IMR-90 (cell line): ENCODE measurements at regions of chr17 and their contacts with region 1.

Region 1: DNA sequence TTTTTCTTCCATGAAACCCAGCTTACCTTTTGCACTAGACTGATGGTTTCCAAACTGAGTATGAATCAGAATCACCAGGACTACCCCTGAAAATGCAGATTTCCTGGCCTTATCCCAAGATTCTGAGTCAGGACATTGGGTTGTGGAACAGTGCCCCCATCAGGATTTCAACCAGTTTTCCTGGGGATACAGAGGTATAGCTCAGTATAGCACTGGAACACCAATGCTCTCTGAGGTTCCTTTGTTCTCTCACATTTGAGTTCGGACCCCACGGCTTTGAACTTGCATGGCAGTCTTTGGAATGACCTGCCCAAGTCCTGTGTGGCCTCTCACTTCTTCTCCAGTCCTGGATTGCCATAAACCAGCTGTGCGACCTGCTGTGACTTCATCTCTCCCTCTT is 12.8 kb upstream of the CCL8 start:
- DNase-seq: peak; percentile 87
- ATAC-seq: peak; percentile 87
- H3K4me3 ChIP-seq: no peak overlapping the region
- H3K27ac ChIP-seq: no peak overlapping the region
- H3K4me1 ChIP-seq: peaks cover 8% of the 10 kb centered on the region
- H3K27me3 ChIP-seq: no peaks in the 10 kb centered on the region
- CTCF ChIP-seq: peak; percentile 81
- POLR2A ChIP-seq: no peak
- RAD21 ChIP-seq: peak; percentile 91

Region 2: GRCh38 chr17:33779225-33779591 is 527.3 kb before region 1 on chr17:
- CTCF ChIA-PET with region 1: no interaction called
- POLR2A ChIA-PET with region 1: no interaction called
- dilution Hi-C with region 1: no loop called
- in situ Hi-C with region 1: no loop called
- intact Hi-C with region 1: loop called (anchors 2 kb)
- DNase-seq: peak; percentile 69
- ATAC-seq: peak; percentile 97
- H3K4me3 ChIP-seq: no peak overlapping the region
- H3K27ac ChIP-seq: no peak overlapping the region
- H3K4me1 ChIP-seq: no peaks in the 10 kb centered on the region
- H3K27me3 ChIP-seq: peaks cover 2% of the 10 kb centered on the region; the same call in 1 of the 2 replicates
- CTCF ChIP-seq: peak; percentile 89
- POLR2A ChIP-seq: no peak
- RAD21 ChIP-seq: peak; percentile 54

Region 3: DNA sequence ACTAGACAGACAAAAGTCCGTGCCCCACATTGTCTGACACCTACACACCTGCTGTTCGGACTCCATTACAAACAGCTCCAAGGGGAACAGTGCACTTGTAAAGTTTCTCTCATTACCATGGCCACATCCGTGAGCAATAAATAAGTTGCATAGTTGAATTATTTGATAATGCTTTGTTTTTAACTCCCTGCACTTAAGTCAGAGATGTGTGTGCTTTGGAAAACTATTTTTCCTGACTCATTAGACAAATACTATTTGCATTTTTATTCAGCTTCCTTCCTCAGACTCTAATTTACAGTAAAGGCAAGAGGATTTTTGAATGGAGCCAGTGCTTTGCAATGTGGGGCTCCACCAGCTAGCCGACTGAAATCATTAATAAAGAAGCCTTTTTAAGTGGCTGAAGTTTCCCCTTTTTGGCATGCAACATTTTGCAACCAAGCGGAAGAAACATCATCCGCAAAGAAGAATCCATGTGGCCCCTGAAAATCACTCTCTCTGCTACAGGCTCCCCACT is 57.9 kb before region 1 on chr17:
- CTCF ChIA-PET with region 1: interaction called, 3 read pairs
- POLR2A ChIA-PET with region 1: interaction called, 3 read pairs
- dilution Hi-C with region 1: no loop called
- in situ Hi-C with region 1: loop called (anchors 5 kb)
- intact Hi-C with region 1: no loop called
- DNase-seq: peak; percentile 92
- ATAC-seq: peak; percentile 54
- H3K4me3 ChIP-seq: no peak overlapping the region
- H3K27ac ChIP-seq: peak overlapping the region; percentile 83
- H3K4me1 ChIP-seq: peaks cover 43% of the 10 kb centered on the region
- H3K27me3 ChIP-seq: no peaks in the 10 kb centered on the region
- CTCF ChIP-seq: no peak
- POLR2A ChIP-seq: no peak
- RAD21 ChIP-seq: no peak

Region 4: DNA sequence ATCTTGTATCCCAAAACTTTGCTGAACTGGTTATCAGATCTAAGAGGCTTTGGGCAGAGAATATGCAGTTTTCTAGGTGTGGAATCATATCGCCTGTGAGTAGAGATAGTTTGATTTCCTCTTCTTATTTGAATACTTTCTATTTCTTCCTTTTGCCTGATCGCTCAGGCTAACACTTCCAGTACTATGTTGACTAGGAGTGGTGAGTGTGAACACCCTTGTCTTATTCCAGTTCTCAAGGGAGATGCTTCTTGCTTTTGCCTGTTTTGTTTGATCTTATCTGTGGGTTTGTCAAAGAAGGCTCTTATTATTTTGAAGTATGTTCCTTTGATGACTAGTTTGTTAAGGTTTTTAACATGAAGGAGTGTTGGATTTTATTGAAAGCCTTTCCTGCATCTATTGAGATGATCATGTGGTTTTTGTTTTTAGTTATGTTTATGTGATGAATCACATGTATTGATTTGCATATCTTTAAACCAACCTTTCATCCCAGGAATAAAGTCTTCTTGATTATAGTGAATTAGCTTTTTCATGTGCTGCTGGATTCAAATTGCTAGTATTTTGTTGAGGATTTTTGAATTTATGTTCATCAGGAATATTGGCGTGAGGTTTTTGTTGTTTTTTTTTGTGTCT is 32.8 kb after region 1 on chr17:
- CTCF ChIA-PET with region 1: no interaction called
- POLR2A ChIA-PET with region 1: no interaction called
- dilution Hi-C with region 1: no loop called
- in situ Hi-C with region 1: no loop called
- intact Hi-C with region 1: no loop called
- DNase-seq: no peak
- ATAC-seq: no peak
- H3K4me3 ChIP-seq: no peak overlapping the region
- H3K27ac ChIP-seq: no peak overlapping the region
- H3K4me1 ChIP-seq: no peaks in the 10 kb centered on the region
- H3K27me3 ChIP-seq: no peaks in the 10 kb centered on the region; the same call in 1 of the 2 replicates
- CTCF ChIP-seq: no peak
- POLR2A ChIP-seq: no peak
- RAD21 ChIP-seq: no peak